GM10248 (cell line): ENCODE measurements at regions of chr3 and their contacts with region 1.

Region 1: DNA sequence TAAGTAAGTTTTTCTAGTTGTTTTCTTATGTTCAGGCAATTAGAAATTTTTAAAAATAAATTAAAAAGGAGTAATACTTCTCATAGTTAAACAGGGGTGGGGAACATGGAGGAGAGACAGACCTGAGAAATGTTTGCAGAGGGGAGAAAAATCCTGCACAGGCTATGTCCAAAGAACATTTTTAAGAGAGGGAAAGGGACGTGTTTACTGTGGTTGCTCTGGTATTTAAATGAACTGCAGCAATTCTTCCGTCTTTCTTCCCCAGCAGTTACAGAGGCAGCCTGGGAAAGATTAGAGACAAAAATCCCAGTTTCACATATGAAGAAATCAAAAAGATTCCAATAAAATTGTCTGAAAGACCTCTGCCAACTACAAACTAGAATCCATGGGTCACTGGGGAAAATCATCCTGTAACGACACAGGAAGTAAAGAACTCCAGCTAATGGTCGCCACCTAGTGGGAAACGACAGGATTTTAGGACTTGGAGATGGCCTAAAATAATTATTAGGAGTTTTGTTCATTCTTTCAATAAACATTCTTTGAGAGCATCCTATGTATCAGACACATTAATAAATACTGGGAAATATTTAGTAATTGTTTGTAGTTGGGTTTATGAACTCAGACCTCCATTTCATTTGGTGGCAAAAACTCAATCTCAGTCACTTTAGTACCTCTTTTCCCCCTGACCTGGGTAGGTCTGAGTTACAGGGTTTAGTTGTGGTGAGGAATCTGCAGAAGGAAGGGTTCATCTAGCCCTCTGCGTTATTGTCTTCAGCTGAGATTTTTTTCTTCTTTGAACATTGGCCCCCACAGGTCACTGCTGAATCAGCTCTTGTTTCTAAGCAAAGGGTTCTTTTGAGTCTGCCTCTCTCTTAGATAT is 69.9 kb upstream of the GOLIM4 start:
- DNase-seq: peak; percentile 66
- CTCF ChIP-seq: peak; percentile 64

Region 2: GRCh38 chr3:168030577-168030976 is 135.1 kb before region 1 on chr3:
- CTCF ChIA-PET with region 1: interaction called, 14 read pairs
- POLR2A ChIA-PET with region 1: no interaction called
- DNase-seq: no peak
- CTCF ChIP-seq: no peak

Region 3: GRCh38 chr3:168047190-168047795 is 118.3 kb before region 1 on chr3:
- CTCF ChIA-PET with region 1: interaction called, 195 read pairs
- POLR2A ChIA-PET with region 1: no interaction called
- DNase-seq: peak; percentile 57
- CTCF ChIP-seq: peak; percentile 69

Region 4: DNA sequence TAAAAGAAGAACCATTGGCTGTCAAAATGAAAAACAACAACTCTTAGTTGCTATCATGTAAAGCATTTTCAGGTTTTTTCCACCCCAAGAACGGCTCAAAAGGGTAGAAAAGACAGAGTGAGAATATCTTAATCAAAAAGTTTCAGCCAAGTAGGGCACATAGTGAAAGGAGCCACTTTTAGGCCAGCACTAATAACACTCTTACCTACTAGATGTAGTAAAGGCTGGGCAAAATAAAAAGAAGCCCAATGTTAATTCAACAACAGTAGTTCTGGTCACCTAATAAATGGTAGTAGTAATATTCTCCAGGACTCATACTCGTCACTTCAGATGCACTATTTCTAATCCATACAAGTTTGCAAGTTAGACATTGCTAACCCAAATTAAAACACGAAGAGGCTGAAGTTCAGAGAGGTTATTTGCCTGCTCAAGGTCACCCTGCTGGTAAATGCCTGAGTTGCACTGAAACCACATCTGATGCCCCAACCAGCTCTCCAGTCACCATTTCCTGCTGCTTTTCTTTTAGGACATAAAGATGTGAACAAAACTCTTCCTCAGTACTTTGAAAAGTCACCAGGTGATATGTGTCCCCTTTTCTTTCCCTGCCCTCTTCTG is 77.4 kb before region 1 on chr3:
- CTCF ChIA-PET with region 1: interaction called, 18 read pairs
- POLR2A ChIA-PET with region 1: no interaction called
- DNase-seq: peak; percentile 16
- CTCF ChIP-seq: peak; percentile 28

Region 5: DNA sequence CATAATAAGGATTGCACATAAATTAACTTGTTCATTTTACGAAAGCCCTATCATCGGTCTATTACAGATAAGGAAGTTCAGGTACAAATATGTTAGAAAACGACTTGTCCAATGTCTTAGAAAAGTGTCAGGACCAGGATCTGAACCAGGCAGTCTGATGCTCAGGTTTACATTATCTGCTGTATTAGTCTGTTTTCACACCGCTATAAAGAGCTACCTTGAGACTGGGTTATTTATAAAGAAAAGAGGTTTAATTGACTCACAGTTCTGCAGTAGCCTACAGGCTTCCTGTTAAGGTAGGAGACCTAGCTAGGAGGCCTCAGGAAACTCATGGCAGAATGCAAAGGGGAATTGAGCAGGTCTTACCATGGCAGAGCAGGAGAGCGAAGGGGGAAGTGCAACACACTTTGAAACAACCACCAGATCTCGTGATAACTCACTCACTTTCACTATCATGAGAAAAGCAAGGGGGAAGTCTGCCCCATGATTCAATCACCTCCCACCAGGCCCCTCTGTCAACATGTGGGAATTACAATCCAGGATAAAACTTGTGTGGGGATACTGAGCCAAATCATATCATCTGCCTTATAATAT is 24.1 kb before region 1 on chr3:
- CTCF ChIA-PET with region 1: interaction called, 17 read pairs
- POLR2A ChIA-PET with region 1: no interaction called
- DNase-seq: no peak
- CTCF ChIP-seq: no peak

Region 6: DNA sequence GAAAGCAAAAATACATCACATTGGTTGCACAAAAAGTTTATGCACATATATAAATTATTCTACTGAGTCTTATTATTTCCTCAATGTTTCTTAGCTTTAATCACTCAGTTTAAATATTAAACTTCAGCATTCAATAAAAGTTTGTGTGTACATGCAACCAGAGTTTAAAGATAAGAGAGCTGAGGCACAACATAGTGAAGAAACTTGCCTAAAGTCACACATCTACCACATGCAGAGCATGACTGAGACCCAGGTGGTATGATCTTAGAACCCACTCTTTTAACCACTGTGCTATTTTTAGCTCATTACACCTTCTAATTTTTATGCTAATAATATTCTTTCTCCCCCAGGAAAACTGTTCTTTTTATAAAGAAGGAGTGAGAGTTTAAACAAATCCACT is 26.2 kb after region 1 on chr3:
- CTCF ChIA-PET with region 1: no interaction called
- POLR2A ChIA-PET with region 1: no interaction called
- DNase-seq: no peak
- CTCF ChIP-seq: no peak

Region 7: GRCh38 chr3:168220556-168220955 is 54.9 kb after region 1 on chr3:
- CTCF ChIA-PET with region 1: no interaction called
- POLR2A ChIA-PET with region 1: no interaction called
- DNase-seq: no peak
- CTCF ChIP-seq: no peak

Region 8: GRCh38 chr3:169362301-169362700 is 1196.7 kb after region 1 on chr3:
- CTCF ChIA-PET with region 1: no interaction called
- POLR2A ChIA-PET with region 1: no interaction called
- DNase-seq: no peak
- CTCF ChIP-seq: no peak